ENCODE measurements at regions of chr10 and their contacts with region 1.

Region 1: DNA sequence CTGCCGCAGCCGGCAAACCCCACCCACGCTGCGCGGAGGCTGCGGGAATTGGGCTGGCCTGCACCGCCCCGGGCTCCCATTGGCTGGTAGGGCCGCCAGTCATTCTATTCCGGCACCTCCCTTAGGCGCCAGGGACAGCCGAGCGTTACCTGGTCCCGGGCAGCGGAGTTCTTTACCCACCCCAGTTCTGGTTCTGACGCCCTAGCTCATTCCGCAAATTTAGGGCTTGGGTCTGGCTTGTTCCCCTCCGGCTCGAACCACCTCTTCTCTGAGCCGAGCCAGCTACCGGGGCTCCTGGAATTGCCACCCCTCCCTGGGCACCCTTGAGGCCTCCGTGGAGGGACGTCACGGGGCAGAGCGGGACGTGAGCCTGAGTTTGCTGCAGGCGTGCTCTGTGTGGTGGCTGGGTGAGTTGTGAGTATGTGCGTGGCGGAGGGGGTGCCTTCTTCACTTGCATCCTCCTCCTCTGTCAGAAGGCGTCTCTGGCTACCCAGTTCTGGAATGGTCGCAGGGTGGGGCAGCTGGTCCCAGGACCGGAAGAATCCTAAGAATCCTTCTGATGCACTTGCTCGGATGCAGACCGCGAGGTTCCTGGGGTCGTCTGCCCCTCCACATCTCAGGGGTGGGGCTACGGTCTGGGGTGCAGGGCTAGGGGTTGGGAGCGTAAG is at the starts of genes PDZD7 and SFXN3:
- DNase-seq: peak; percentile 93 to 98 (median 97)
- ATAC-seq: peak; percentile 88
- H3K4me3 ChIP-seq: peak within 1 kb of the TSS; percentile 99
- H3K4me3 Mint-ChIP-seq: peak within 1 kb of the TSS; percentile 85 to 99 (median 94)
- H3K27ac ChIP-seq: peak within 1 kb of the TSS; percentile 98
- H3K27ac Mint-ChIP-seq: peak within 1 kb of the TSS; percentile 75 to 97 (median 93)
- H3K4me1 ChIP-seq: peaks cover 12 to 14% of the 10 kb centered on the region in 2 donors
- H3K4me1 Mint-ChIP-seq: peaks cover 6 to 21% (median 16%) of the 10 kb centered on the region in 7 donors
- H3K27me3 ChIP-seq: no peaks in the 10 kb centered on the region
- H3K27me3 Mint-ChIP-seq: peaks cover 0 to 21% (median 0%) of the 10 kb centered on the region in 5 donors
- total RNA-seq, gene PDZD7: 0.65 to 2.8 (median 1.8) TPM
- total RNA-seq, gene SFXN3: 33.7 to 90.4 (median 48.4) TPM

Region 2: DNA sequence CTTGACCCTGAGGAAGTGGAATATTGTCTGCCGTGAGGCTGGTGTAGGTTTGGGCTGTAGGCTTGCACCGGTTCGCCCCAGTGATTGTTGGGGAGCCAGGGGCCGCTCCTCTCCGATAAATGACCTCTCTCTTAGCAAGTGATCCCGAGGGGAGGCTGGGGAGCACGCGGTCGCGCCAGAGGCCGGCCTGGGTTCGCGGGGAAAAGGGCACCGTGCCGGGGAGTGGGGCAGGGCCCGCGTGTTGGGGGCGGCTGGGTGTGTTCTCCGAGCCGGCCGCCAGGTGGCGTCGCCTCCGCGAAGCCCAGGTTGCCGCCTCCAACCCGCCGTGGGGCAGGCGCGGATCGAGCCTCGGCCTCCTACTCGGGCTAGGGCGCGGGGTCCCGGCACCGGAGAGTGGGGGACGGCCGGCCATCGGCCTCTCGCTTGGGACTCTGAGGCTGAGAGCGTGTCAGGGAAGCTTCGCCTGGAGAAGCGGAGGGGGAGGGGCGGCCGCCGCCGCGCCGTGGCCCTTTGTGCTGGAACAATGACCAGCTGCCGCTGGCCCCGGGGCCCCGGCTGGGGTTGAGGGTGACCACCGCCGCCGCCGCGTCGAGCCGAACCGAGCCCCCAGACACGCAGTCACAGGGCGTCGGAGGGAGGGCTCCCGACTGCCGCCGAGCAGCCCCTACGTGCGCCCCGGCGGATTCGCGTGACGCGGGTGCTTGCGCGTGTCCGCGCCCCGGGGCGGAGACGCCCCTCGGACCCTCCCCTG is 32.1 kb before region 1 on chr10:
- CTCF ChIA-PET with region 1: interaction called, 6 read pairs
- POLR2A ChIA-PET with region 1: interaction called, 34 read pairs
- intact Hi-C with region 1: loop called (anchors 1 kb)
- DNase-seq: peak; percentile 69 to 90 (median 82)
- ATAC-seq: peak; percentile 82
- H3K4me3 ChIP-seq: peak overlapping the region; percentile 87
- H3K4me3 Mint-ChIP-seq: peak overlapping the region; percentile 87 to 98 (median 92)
- H3K27ac ChIP-seq: peak overlapping the region; percentile 99
- H3K27ac Mint-ChIP-seq: peak overlapping the region; percentile 88 to 99 (median 94)
- H3K4me1 ChIP-seq: peaks cover 20 to 22% of the 10 kb centered on the region in 2 donors
- H3K4me1 Mint-ChIP-seq: peaks cover 15 to 37% (median 23%) of the 10 kb centered on the region in 7 donors
- H3K27me3 ChIP-seq: no peaks in the 10 kb centered on the region
- H3K27me3 Mint-ChIP-seq: no peaks in the 10 kb centered on the region

Region 3: DNA sequence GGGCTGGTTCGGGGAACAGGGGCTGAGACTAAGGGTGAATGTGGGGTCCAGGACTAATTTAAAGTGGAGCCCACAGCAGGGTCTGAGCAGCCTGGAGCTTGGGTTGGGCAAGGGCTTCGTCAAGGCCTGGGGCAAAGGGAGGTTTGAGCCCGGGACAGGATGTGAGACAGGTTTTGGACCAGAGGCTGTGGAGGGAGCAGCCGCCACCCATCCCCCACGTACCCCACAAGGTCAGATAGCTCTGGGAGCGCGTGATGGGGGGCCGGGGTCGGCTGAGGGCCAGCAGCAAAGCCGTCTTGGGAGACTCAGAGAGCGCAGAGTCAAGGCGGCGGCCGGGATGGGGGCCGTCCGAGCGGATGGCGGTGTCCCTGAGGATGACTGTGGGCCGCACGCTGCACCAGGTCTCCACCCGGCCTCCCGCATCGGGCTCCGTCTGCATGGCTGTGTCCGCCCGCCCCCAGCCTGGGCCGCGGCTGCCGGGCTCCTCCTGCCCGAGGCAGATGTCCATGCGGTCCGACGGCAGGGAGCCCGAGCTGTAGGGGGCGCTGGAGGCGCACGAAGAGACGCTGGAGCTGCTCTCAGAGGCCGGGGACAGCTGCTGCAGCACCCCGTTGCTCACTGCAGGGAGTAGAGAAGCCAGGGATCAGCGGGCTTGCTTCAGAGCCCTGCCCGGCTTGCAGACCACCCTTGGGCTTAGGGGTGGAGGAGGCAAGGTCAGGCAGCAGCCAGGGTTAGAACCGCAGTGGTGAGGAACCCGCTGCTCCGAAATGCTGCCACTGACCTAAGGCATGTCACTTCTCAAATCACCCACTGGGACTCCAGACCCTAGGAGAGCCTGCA is 12.4 kb before region 1 on chr10:
- CTCF ChIA-PET with region 1: interaction called, 12 read pairs
- POLR2A ChIA-PET with region 1: interaction called, 3 read pairs
- intact Hi-C with region 1: loop called (anchors 1 kb)
- DNase-seq: peak in 8 of 9 donors; percentile 45 to 86 (median 56)
- ATAC-seq: peak; percentile 80
- H3K4me3 ChIP-seq: no peak overlapping the region
- H3K4me3 Mint-ChIP-seq: no peak overlapping the region
- H3K27ac ChIP-seq: no peak overlapping the region
- H3K27ac Mint-ChIP-seq: no peak overlapping the region
- H3K4me1 ChIP-seq: no peaks in the 10 kb centered on the region
- H3K4me1 Mint-ChIP-seq: peaks cover 0 to 20% (median 10%) of the 10 kb centered on the region in 7 donors
- H3K27me3 ChIP-seq: peaks cover 0 to 2% of the 10 kb centered on the region in 2 donors
- H3K27me3 Mint-ChIP-seq: peaks cover 47 to 53% (median 52%) of the 10 kb centered on the region in 5 donors

Region 4: DNA sequence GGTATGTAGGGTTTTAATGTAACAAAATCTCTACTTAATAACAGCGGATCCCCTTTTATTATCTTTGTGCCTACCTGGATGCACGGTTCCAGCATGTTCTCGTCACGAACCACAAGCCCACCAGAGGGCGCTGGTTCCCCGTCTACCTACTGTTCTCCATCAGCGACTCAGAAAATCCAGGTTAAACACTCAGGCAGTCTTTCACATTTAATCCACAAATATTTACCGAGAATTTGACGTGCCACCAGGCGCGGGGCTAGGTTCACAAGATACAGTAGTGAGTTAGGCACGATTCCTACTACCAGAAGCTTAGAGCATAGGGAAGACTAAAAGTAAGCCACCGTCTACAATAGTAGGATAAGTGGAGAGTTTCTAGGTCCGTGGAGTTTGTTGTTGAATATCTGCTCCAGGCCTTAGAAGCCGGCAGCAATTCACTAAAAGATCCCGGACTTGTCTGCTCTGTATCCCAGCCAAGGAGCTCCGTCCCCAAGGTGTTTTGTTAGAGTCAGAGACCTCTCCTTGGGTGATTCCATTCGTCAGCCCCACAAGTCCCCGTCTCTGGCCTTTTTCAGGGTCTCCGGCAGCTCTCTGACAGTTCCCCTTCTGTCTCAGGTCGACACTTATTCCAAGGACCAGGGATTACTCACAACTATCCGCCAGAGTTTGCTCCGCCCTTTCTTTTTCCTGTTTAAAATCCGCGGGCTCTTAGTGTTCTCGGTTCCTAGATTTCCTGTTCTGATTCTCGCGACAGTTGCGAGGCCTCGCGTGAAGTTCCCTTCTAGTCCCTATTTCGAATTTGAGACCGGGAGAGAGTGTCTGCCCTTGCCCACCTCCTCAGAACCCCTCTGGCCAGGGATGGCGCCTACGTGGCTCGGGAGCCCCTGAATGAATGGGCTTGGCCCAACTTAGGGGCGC is 29.0 kb after region 1 on chr10:
- CTCF ChIA-PET with region 1: interaction called, 8 read pairs
- POLR2A ChIA-PET with region 1: interaction called, 3 read pairs
- intact Hi-C with region 1: loop called (anchors 1 kb)
- DNase-seq: peak; percentile 70 to 97 (median 94)
- ATAC-seq: peak; percentile 82
- H3K4me3 ChIP-seq: peak overlapping the region; percentile 96
- H3K4me3 Mint-ChIP-seq: peak overlapping the region; percentile 90 to 99 (median 96)
- H3K27ac ChIP-seq: peak overlapping the region; percentile 96
- H3K27ac Mint-ChIP-seq: peak overlapping the region; percentile 86 to 98 (median 93)
- H3K4me1 ChIP-seq: peaks cover 12 to 21% of the 10 kb centered on the region in 2 donors
- H3K4me1 Mint-ChIP-seq: peaks cover 16 to 61% (median 31%) of the 10 kb centered on the region in 7 donors
- H3K27me3 ChIP-seq: peaks cover 5 to 18% of the 10 kb centered on the region in 2 donors
- H3K27me3 Mint-ChIP-seq: peaks cover 15 to 23% (median 18%) of the 10 kb centered on the region in 5 donors

Region 5: DNA sequence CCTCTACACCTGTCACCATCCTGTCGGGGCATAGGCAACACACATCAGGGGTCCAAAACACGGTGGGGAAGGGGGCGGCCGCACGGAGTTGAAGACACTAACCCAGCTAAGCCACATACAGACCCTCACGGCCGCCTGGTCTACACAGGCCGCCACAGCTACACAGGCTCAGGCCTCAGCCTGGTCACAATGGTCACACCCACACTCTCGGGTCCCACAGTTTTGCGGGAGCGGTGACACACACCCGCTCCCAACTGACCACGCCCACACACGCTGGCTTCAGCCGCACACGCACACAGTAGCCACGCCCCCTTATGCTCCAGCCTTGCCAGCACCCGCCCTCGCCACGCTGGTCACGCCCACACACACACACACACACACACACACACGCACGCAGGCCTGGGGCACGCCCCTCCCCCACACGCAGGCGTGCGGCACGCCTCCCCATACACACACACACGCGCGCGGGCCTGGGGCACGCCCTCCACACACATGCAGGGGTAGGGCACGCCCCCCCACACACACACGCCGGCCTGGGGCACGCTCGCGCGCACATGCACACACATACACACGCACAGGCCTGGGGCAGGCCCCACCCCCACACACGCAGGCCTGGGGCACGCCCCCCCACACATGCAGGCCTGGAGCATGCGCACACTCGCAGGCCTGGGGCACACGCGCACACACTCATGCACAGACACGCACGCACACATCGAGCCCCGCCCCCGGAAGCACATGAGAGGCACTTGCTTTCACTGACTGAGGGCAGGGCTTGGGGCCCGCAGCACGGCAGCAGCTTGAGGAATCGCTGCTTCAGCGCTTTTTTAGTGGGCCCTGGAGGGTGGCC is 799.3 kb after region 1 on chr10:
- CTCF ChIA-PET with region 1: no interaction called
- POLR2A ChIA-PET with region 1: no interaction called
- intact Hi-C with region 1: loop called in 1 of 2 experiments (anchors 10 kb)
- DNase-seq: peak; percentile 89 to 98 (median 95)
- ATAC-seq: peak; percentile 90
- H3K4me3 ChIP-seq: peak overlapping the region; percentile 66
- H3K4me3 Mint-ChIP-seq: peak overlapping the region; percentile 79 to 94 (median 88)
- H3K27ac ChIP-seq: peak overlapping the region; percentile 85
- H3K27ac Mint-ChIP-seq: peak overlapping the region; percentile 94 to 100 (median 99)
- H3K4me1 ChIP-seq: peaks cover 22 to 53% of the 10 kb centered on the region in 2 donors
- H3K4me1 Mint-ChIP-seq: peaks cover 41 to 59% (median 53%) of the 10 kb centered on the region in 7 donors
- H3K27me3 ChIP-seq: no peaks in the 10 kb centered on the region
- H3K27me3 Mint-ChIP-seq: peaks cover 0 to 4% (median 0%) of the 10 kb centered on the region in 5 donors

Measured in naive thymus-derived CD4-positive, alpha-beta T cell (primary cell).